CD14-positive monocyte (primary cell): ENCODE measurements at regions of chr1 and their contacts with region 1.

Region 1: GRCh38 chr1:203267347-203267846 is 37.9 kb upstream of the BTG2 start:
- DNase-seq: peak; percentile 80 to 87 (median 81)
- H3K4me3 ChIP-seq: peak overlapping the region; percentile 35 to 79 (median 40)
- H3K4me3 Mint-ChIP-seq: peak overlapping the region; percentile 90 to 96
- H3K27ac ChIP-seq: peak overlapping the region in 1 of 2 donors; percentile 54
- H3K27ac Mint-ChIP-seq: peak overlapping the region; percentile 51 to 93 (median 78)
- H3K4me1 ChIP-seq: peaks cover 16% of the 10 kb centered on the region in 2 donors
- H3K4me1 Mint-ChIP-seq: peaks cover 13% of the 10 kb centered on the region
- H3K27me3 ChIP-seq: no peaks in the 10 kb centered on the region
- H3K27me3 Mint-ChIP-seq: peaks cover 3 to 10% (median 3%) of the 10 kb centered on the region in 3 donors
- CTCF ChIP-seq: peak; percentile 93

Region 2: GRCh38 chr1:203038891-203039608 is 228.3 kb before region 1 on chr1:
- intact Hi-C with region 1: loop called (anchors 2 to 5 kb)
- DNase-seq: peak; percentile 53 to 71 (median 68)
- H3K4me3 ChIP-seq: no peak overlapping the region
- H3K4me3 Mint-ChIP-seq: peak overlapping the region in 1 of 2 donors; percentile 35
- H3K27ac ChIP-seq: no peak overlapping the region
- H3K27ac Mint-ChIP-seq: no peak overlapping the region
- H3K4me1 ChIP-seq: no peaks in the 10 kb centered on the region
- H3K4me1 Mint-ChIP-seq: peaks cover 12% of the 10 kb centered on the region
- H3K27me3 ChIP-seq: peaks cover 0 to 2% of the 10 kb centered on the region in 2 donors
- H3K27me3 Mint-ChIP-seq: peaks cover 3 to 36% (median 17%) of the 10 kb centered on the region in 3 donors
- CTCF ChIP-seq: peak; percentile 95

Region 3: GRCh38 chr1:203135636-203136305 is 131.6 kb before region 1 on chr1:
- intact Hi-C with region 1: no loop called
- DNase-seq: peak; percentile 40 to 65 (median 58)
- H3K4me3 ChIP-seq: no peak overlapping the region
- H3K4me3 Mint-ChIP-seq: peak overlapping the region in 1 of 2 donors; percentile 56
- H3K27ac ChIP-seq: no peak overlapping the region
- H3K27ac Mint-ChIP-seq: peak overlapping the region in 2 of 7 donors; percentile 10 to 70
- H3K4me1 ChIP-seq: peaks cover 18 to 23% of the 10 kb centered on the region in 2 donors
- H3K4me1 Mint-ChIP-seq: peaks cover 23% of the 10 kb centered on the region
- H3K27me3 ChIP-seq: peaks cover 16 to 61% of the 10 kb centered on the region in 2 donors
- H3K27me3 Mint-ChIP-seq: peaks cover 24 to 48% (median 37%) of the 10 kb centered on the region in 3 donors
- CTCF ChIP-seq: no peak

Region 4: GRCh38 chr1:203320591-203321272 is 53.3 kb after region 1 on chr1:
- intact Hi-C with region 1: no loop called
- DNase-seq: peak in 2 of 3 donors; percentile 54 to 69
- H3K4me3 ChIP-seq: peak overlapping the region in 1 of 3 experiments; percentile 11
- H3K4me3 Mint-ChIP-seq: peak overlapping the region in 1 of 2 donors; percentile 53
- H3K27ac ChIP-seq: peak overlapping the region in 1 of 2 donors; percentile 53
- H3K27ac Mint-ChIP-seq: peak overlapping the region; percentile 23 to 88 (median 86)
- H3K4me1 ChIP-seq: peaks cover 60% of the 10 kb centered on the region in 2 donors
- H3K4me1 Mint-ChIP-seq: peaks cover 66% of the 10 kb centered on the region
- H3K27me3 ChIP-seq: no peaks in the 10 kb centered on the region
- H3K27me3 Mint-ChIP-seq: peaks cover 0 to 2% (median 2%) of the 10 kb centered on the region in 3 donors
- CTCF ChIP-seq: no peak